Activated naive CD8-positive, alpha-beta T cell treated with anti-CD3 and anti-CD28 coated beads, Interleukin-2, amount 10 ng/mL, durations not matched to agents 7 days and 5 days (primary cell): ENCODE measurements at regions of chr14 and their contacts with region 1.

Region 1: GRCh38 chr14:58297762-58298476 is 436 bp upstream of the ARID4A start:
- DNase-seq: peak; percentile 94
- ATAC-seq: peak; percentile 90
- H3K4me3 Mint-ChIP-seq: no peak overlapping the region
- H3K27ac Mint-ChIP-seq: no peak overlapping the region
- H3K4me1 Mint-ChIP-seq: peaks cover 30% of the 10 kb centered on the region
- H3K27me3 Mint-ChIP-seq: no peaks in the 10 kb centered on the region

Region 2: DNA sequence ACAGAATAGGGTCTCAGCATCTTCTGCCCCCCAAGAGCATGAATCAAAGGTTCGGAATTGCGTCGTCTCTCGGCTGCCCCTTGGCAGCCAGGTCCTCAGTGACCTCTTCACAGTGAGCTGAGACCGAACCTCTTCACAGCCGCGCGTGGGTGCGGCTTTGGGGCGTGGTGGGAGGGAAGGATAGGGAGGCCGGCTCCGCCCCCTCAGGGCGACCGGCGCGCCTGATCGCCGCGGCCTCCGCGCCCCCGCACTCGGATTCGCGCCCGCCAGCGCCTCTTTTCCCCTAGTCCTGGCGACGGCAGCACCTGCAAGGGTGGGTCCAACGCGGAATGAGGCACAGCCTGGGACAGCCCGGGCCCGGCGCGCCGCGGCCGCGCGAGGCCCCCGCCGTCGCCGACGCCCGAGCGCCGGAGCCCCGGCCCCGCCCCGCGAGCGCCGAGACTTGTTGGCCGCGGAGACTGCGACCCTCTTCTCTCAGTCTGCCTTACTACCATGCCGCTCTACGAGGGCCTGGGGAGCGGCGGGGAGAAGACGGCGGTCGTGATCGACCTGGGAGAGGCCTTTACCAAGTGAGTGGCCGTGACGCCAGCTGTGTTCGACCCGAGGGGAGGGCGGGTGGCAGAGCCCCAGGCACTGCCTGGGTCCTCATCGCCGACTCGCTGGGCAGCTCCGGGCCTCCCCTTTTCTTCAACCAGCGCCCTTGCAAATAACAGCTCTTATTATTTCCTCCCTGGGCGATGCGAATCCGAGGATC is 98.0 kb before region 1 on chr14 and contains the start of gene ACTR10:
- POLR2A ChIA-PET with region 1: interaction called, 12 read pairs
- DNase-seq: peak; percentile 93
- ATAC-seq: peak; percentile 92
- H3K4me3 Mint-ChIP-seq: peak within 1 kb of the TSS; percentile 94
- H3K27ac Mint-ChIP-seq: peak within 1 kb of the TSS; percentile 93
- H3K4me1 Mint-ChIP-seq: peaks cover 14% of the 10 kb centered on the region
- H3K27me3 Mint-ChIP-seq: no peaks in the 10 kb centered on the region
- total RNA-seq, gene ACTR10: 44.9 to 50.1 TPM

Region 3: GRCh38 chr14:58244556-58245387 is 53.1 kb before region 1 on chr14 and contains the start of gene PSMA3:
- POLR2A ChIA-PET with region 1: interaction called, 64 read pairs
- DNase-seq: peak; percentile 95
- ATAC-seq: peak; percentile 95
- H3K4me3 Mint-ChIP-seq: peak within 1 kb of the TSS; percentile 84
- H3K27ac Mint-ChIP-seq: peak within 1 kb of the TSS; percentile 94
- H3K4me1 Mint-ChIP-seq: peaks cover 32% of the 10 kb centered on the region
- H3K27me3 Mint-ChIP-seq: no peaks in the 10 kb centered on the region
- total RNA-seq, gene PSMA3: 189 to 203 TPM

Region 4: DNA sequence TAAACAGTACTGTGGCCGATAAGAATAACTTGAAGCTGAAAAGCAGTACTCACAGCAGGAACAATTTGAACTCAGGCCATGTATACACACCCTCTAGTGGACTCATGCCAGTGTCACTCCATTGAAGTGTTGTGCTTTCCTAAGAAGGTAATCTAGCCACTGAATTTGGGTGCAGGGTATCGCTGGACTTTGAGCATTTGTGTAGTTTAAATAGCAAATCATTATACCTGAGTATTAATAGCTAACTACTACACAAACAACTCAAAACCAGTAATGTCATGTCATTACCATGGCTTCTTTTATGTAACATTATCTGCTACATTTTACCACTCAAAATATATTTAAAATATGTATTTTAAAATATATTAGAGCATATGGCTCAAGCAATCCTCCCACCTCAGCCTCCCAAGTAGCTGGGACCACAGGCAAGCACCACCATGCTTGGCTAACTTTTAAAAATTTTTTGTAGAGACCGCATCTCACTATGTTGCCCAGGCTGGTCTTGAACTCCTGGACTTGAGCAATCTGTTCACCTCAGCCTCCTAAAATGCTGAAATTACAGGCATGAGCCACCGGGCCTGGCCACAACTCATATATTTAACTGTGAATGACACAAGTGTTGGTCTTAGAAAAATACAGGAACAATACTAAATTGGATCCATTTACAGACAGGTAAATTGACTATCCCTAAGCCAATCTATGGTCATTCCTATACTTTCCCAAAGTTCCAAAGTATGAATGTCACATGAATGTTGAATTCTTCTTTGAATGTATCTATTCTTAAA is 25.1 kb before region 1 on chr14:
- POLR2A ChIA-PET with region 1: interaction called, 16 read pairs
- DNase-seq: no peak
- ATAC-seq: no peak
- H3K4me3 Mint-ChIP-seq: no peak overlapping the region
- H3K27ac Mint-ChIP-seq: no peak overlapping the region
- H3K4me1 Mint-ChIP-seq: peaks cover 34% of the 10 kb centered on the region
- H3K27me3 Mint-ChIP-seq: no peaks in the 10 kb centered on the region

Region 5: GRCh38 chr14:58427281-58428117 is 129.6 kb after region 1 on chr14 and contains the starts of genes KIAA0586 and TIMM9:
- POLR2A ChIA-PET with region 1: interaction called, 36 read pairs
- DNase-seq: peak; percentile 88
- ATAC-seq: peak; percentile 94
- H3K4me3 Mint-ChIP-seq: peak within 1 kb of the TSS; percentile 98
- H3K27ac Mint-ChIP-seq: peak within 1 kb of the TSS; percentile 99
- H3K4me1 Mint-ChIP-seq: peaks cover 34% of the 10 kb centered on the region
- H3K27me3 Mint-ChIP-seq: no peaks in the 10 kb centered on the region
- total RNA-seq, gene KIAA0586: 27.4 to 29.9 TPM
- total RNA-seq, gene TIMM9: 34.6 to 38.0 TPM